CD4-positive, alpha-beta memory T cell (primary cell): ENCODE measurements at regions of chr19 and their contacts with region 1.

Region 1: DNA sequence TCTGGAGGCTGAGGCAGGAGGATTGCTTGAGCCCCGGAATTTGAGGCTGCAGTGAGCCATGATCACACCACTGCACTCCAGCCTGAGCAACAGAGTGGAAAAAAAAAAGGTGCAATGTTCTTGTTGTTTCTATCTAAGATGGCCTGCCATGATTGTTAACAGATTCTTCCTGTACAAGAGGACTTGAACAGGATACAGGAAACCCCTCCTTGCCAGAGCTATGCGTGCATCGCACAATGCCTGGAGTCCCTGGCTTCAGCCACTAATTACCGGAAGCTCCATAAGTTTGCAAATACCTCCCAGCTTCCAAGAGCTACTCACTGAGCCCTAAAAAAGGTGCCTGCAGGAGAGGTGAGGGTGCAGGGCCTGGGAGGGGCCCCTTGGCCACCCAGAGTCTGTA is 13.1 kb upstream of the HIF3A start:
- DNase-seq: no peak
- H3K4me3 ChIP-seq: no peak overlapping the region
- H3K4me3 Mint-ChIP-seq: no peak overlapping the region
- H3K27ac ChIP-seq: no peak overlapping the region
- H3K27ac Mint-ChIP-seq: no peak overlapping the region
- H3K4me1 ChIP-seq: no peaks in the 10 kb centered on the region
- H3K4me1 Mint-ChIP-seq: peaks cover 0 to 3% (median under 1%) of the 10 kb centered on the region in 4 donors
- H3K27me3 ChIP-seq: no peaks in the 10 kb centered on the region
- H3K27me3 Mint-ChIP-seq: peaks cover 4 to 10% of the 10 kb centered on the region in 2 donors

Region 2: GRCh38 chr19:46308510-46308909 is 24.7 kb after region 1 on chr19:
- CTCF ChIA-PET with region 1: no interaction called
- POLR2A ChIA-PET with region 1: no interaction called
- intact Hi-C with region 1: no loop called
- DNase-seq: no peak
- H3K4me3 ChIP-seq: no peak overlapping the region
- H3K4me3 Mint-ChIP-seq: no peak overlapping the region
- H3K27ac ChIP-seq: no peak overlapping the region
- H3K27ac Mint-ChIP-seq: no peak overlapping the region
- H3K4me1 ChIP-seq: no peaks in the 10 kb centered on the region
- H3K4me1 Mint-ChIP-seq: peaks cover 0 to 3% (median 0%) of the 10 kb centered on the region in 4 donors
- H3K27me3 ChIP-seq: no peaks in the 10 kb centered on the region
- H3K27me3 Mint-ChIP-seq: peaks cover 2% of the 10 kb centered on the region in 2 donors

Region 3: GRCh38 chr19:46355234-46356148 is 71.7 kb after region 1 on chr19:
- CTCF ChIA-PET with region 1: no interaction called
- POLR2A ChIA-PET with region 1: no interaction called
- intact Hi-C with region 1: no loop called
- DNase-seq: no peak
- H3K4me3 ChIP-seq: no peak overlapping the region
- H3K4me3 Mint-ChIP-seq: no peak overlapping the region
- H3K27ac ChIP-seq: no peak overlapping the region
- H3K27ac Mint-ChIP-seq: peak overlapping the region in 2 of 7 donors; percentile 59 to 64
- H3K4me1 ChIP-seq: peaks cover 26% of the 10 kb centered on the region
- H3K4me1 Mint-ChIP-seq: peaks cover 21 to 62% (median 44%) of the 10 kb centered on the region in 4 donors
- H3K27me3 ChIP-seq: no peaks in the 10 kb centered on the region
- H3K27me3 Mint-ChIP-seq: no peaks in the 10 kb centered on the region

Region 4: GRCh38 chr19:46392243-46392801 is 108.6 kb after region 1 on chr19:
- CTCF ChIA-PET with region 1: interaction called, 3 read pairs
- POLR2A ChIA-PET with region 1: no interaction called
- intact Hi-C with region 1: loop called (anchors 1 kb)
- DNase-seq: no peak
- H3K4me3 ChIP-seq: no peak overlapping the region
- H3K4me3 Mint-ChIP-seq: no peak overlapping the region
- H3K27ac ChIP-seq: no peak overlapping the region
- H3K27ac Mint-ChIP-seq: peak overlapping the region in 2 of 7 donors; percentile 46 to 64
- H3K4me1 ChIP-seq: no peaks in the 10 kb centered on the region
- H3K4me1 Mint-ChIP-seq: peaks cover 3 to 10% (median 4%) of the 10 kb centered on the region in 4 donors
- H3K27me3 ChIP-seq: no peaks in the 10 kb centered on the region
- H3K27me3 Mint-ChIP-seq: peaks cover 0 to 2% of the 10 kb centered on the region in 2 donors